ENCODE measurements at regions of chrX and their contacts with region 1.

Region 1: DNA sequence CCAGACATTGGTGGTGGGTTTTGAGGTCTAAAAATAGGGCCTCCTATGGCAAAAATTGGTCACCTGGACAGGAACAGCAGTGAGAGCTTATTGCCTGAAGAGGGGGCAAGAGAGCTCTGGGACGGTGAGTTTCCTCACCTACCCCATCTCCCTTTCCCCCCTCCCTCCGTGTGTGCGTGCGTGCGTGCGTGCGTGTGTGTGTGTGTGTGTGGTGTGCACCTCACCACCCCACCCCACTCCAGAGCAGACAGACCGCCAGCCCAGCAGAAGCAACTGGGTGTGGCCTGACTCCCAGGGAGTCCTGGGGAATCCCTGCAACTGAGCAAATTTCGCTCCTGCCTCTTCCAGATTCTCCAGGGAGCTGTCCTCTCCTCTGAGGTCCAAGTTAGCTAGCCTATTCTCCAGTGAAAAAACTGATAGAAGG is 44.7 kb downstream of the PRPS1 start:
- DNase-seq: peak; percentile 86 to 92 (median 91)
- H3K4me3 ChIP-seq: peak overlapping the region in 3 of 7 experiments; percentile 1 to 52 (median 15)
- H3K27ac ChIP-seq: peak overlapping the region; percentile 97 to 98
- H3K4me1 ChIP-seq: peaks cover 14 to 48% (median 38%) of the 10 kb centered on the region in 4 experiments
- H3K27me3 ChIP-seq: peaks cover 0 to 6% (median 0%) of the 10 kb centered on the region in 5 experiments

Region 2: GRCh38 chrX:107654872-107655761 is 17.9 kb before region 1 on chrX:
- CTCF ChIA-PET with region 1: interaction called, 11 read pairs
- POLR2A ChIA-PET with region 1: no interaction called
- DNase-seq: peak in 2 of 3 donors; percentile 63 to 67
- H3K4me3 ChIP-seq: peak overlapping the region in 1 of 7 experiments; percentile 48
- H3K27ac ChIP-seq: no peak overlapping the region
- H3K4me1 ChIP-seq: peaks cover 0 to 6% (median 0%) of the 10 kb centered on the region in 4 experiments
- H3K27me3 ChIP-seq: peaks cover 0 to 7% (median 0%) of the 10 kb centered on the region in 5 experiments

Region 3: GRCh38 chrX:107662145-107662544 is 10.8 kb before region 1 on chrX:
- CTCF ChIA-PET with region 1: interaction called, 18 read pairs
- POLR2A ChIA-PET with region 1: no interaction called
- DNase-seq: no peak
- H3K4me3 ChIP-seq: no peak overlapping the region
- H3K27ac ChIP-seq: no peak overlapping the region
- H3K4me1 ChIP-seq: no peaks in the 10 kb centered on the region
- H3K27me3 ChIP-seq: no peaks in the 10 kb centered on the region

Region 4: DNA sequence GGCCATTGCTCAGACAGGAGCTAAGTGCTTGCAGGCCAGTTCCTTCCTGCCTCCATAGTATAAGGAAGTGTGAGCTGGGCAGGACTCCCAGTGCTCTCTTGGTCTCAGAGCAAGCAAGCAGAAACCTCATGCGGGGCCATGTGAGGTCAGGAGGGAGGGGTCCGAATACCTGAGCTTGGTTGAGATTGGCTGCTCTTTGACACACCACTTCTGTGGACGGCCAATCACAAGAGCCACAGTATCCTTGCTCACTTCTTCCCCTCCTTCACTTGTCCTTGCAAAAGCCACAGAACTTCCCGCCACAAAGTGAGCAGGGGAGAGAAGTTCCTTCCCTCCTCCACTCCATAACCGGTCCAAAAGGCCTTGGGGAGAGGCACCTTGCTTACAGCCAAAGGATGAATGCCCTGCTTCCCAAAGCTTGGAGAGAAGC is 12.0 kb after region 1 on chrX:
- CTCF ChIA-PET with region 1: interaction called, 16 read pairs
- POLR2A ChIA-PET with region 1: interaction called, 3 read pairs
- DNase-seq: peak; percentile 47 to 75 (median 69)
- H3K4me3 ChIP-seq: no peak overlapping the region
- H3K27ac ChIP-seq: peak overlapping the region in 1 of 2 experiments; percentile 17
- H3K4me1 ChIP-seq: peaks cover 4 to 47% (median 36%) of the 10 kb centered on the region in 4 experiments
- H3K27me3 ChIP-seq: no peaks in the 10 kb centered on the region

Region 5: DNA sequence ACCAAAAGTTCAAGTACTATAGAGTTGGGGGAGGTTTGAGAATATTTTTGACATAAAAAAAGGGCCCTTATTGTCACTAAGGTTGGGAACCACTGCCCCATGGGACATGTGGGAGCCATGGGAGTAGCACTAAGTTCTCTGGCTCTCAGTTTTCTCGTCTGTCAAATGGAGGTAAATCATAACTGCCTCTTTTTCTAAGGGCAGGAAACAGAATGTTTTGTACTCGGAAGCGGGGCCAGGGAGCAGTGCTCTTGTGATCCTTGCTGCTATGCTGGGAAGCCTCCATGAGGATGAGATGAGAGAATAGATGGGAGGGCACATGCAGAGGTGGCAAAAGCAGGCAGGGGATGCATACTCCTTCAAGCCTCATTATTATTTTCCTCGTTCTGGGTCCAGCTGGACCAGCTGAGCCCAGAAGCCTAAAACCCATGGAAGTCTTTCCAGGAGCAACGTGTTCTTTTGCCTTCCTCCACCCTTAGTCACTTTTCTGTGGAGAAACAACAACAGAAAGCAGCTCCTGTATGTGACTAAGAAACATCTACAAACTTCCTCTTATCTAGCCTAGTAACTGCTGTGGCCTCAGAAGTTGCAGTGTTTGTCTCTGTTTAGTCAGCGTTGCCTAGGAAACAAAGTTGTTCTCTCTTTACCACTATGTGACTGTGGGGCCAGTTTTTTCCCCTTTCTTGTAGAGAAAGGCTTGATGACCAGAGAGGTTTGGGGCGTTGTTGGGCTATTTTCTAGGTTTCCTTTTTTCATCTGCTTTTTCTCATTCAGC is 37.8 kb after region 1 on chrX:
- CTCF ChIA-PET with region 1: interaction called, 159 read pairs
- POLR2A ChIA-PET with region 1: interaction called, 27 read pairs
- DNase-seq: peak; percentile 93 to 96 (median 95)
- H3K4me3 ChIP-seq: peak overlapping the region in 5 of 7 experiments; percentile 23 to 48 (median 28)
- H3K27ac ChIP-seq: peak overlapping the region; percentile 91 to 97
- H3K4me1 ChIP-seq: peaks cover 6 to 45% (median 31%) of the 10 kb centered on the region in 4 experiments
- H3K27me3 ChIP-seq: peaks cover 0 to 12% (median 0%) of the 10 kb centered on the region in 5 experiments

Region 6: DNA sequence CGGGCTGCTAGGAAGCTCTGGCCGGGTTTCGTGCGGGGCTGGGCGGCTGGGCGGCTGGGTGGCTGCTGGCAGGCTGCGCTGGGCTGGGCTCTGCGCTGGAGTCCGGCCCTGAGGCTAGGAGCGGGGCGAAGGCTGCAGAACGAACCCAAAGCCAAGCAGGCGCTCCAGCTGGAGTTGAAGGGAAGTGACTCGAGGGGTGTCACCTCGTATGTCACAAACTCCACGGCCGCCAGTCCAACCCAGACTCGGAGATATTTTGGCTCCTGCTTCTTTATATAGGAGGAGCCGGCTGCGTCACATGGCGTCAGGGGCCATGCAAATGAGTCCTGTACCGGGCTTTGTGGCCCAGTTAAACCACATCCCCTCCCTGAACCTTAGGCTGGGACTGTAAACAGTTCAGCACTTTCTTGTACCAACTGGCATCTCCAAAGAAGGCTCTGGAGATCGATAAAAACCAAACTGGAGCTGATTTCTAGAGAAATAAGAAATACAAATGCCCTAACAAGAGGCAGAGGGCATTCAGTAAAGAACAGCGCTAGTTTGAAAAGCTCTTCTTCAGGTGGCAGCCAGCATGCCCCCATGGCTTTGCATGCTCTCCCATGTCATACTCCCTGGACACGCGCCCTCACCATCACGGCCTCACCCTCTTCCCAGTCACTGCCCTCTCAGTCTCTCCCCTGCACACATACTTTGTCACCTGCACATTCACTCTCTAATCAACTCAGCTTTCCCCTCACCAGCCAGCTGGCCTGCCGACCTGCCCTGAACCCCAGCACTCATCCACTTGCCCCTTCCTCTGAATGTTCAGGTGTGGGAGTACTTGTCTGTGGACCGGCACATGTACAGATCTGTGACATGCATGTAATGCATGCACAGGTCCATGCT is 44.1 kb after region 1 on chrX:
- CTCF ChIA-PET with region 1: interaction called, 159 read pairs
- POLR2A ChIA-PET with region 1: interaction called, 27 read pairs
- DNase-seq: peak; percentile 87 to 94 (median 93)
- H3K4me3 ChIP-seq: peak overlapping the region; percentile 58 to 91 (median 76)
- H3K27ac ChIP-seq: peak overlapping the region; percentile 73 to 81
- H3K4me1 ChIP-seq: peaks cover 10 to 54% (median 41%) of the 10 kb centered on the region in 4 experiments
- H3K27me3 ChIP-seq: peaks cover 0 to 16% (median 0%) of the 10 kb centered on the region in 5 experiments

Region 7: GRCh38 chrX:107776649-107777535 is 103.9 kb after region 1 on chrX:
- CTCF ChIA-PET with region 1: interaction called, 22 read pairs
- POLR2A ChIA-PET with region 1: interaction called, 3 read pairs
- DNase-seq: peak; percentile 84 to 93 (median 92)
- H3K4me3 ChIP-seq: peak overlapping the region in 6 of 7 experiments; percentile 23 to 75 (median 56)
- H3K27ac ChIP-seq: no peak overlapping the region
- H3K4me1 ChIP-seq: peaks cover 0 to 20% (median 11%) of the 10 kb centered on the region in 4 experiments
- H3K27me3 ChIP-seq: peaks cover 0 to 36% (median 6%) of the 10 kb centered on the region in 5 experiments

Measured in common myeloid progenitor, CD34-positive (primary cell).